Naive thymus-derived CD4-positive, alpha-beta T cell (primary cell): ENCODE measurements at regions of chr3 and their contacts with region 1.

Region 1: GRCh38 chr3:10437272-10437994 is 68.0 kb downstream of the ATP2B2 start:
- DNase-seq: peak in 8 of 9 donors; percentile 35 to 79 (median 48)
- ATAC-seq: peak; percentile 89
- H3K4me3 ChIP-seq: no peak overlapping the region
- H3K4me3 Mint-ChIP-seq: peak overlapping the region in 8 of 10 donors; percentile 17 to 72 (median 58)
- H3K27ac ChIP-seq: no peak overlapping the region
- H3K27ac Mint-ChIP-seq: peak overlapping the region; percentile 46 to 92 (median 80)
- H3K4me1 ChIP-seq: peaks cover 17 to 19% of the 10 kb centered on the region in 2 donors
- H3K4me1 Mint-ChIP-seq: peaks cover 18 to 38% (median 27%) of the 10 kb centered on the region in 7 donors
- H3K27me3 ChIP-seq: no peaks in the 10 kb centered on the region
- H3K27me3 Mint-ChIP-seq: no peaks in the 10 kb centered on the region

Region 2: GRCh38 chr3:10085736-10086135 is 351.7 kb before region 1 on chr3:
- CTCF ChIA-PET with region 1: no interaction called
- POLR2A ChIA-PET with region 1: no interaction called
- intact Hi-C with region 1: no loop called
- DNase-seq: no peak
- ATAC-seq: no peak
- H3K4me3 ChIP-seq: no peak overlapping the region
- H3K4me3 Mint-ChIP-seq: no peak overlapping the region
- H3K27ac ChIP-seq: no peak overlapping the region
- H3K27ac Mint-ChIP-seq: no peak overlapping the region
- H3K4me1 ChIP-seq: no peaks in the 10 kb centered on the region
- H3K4me1 Mint-ChIP-seq: no peaks in the 10 kb centered on the region
- H3K27me3 ChIP-seq: no peaks in the 10 kb centered on the region
- H3K27me3 Mint-ChIP-seq: no peaks in the 10 kb centered on the region

Region 3: GRCh38 chr3:10505050-10505790 is 67.8 kb after region 1 on chr3 and contains the start of gene ATP2B2:
- CTCF ChIA-PET with region 1: no interaction called
- POLR2A ChIA-PET with region 1: no interaction called
- intact Hi-C with region 1: loop called in 1 of 2 experiments (anchors 10 kb)
- DNase-seq: peak in 4 of 9 donors; percentile 2 to 12 (median 8)
- ATAC-seq: no peak
- H3K4me3 ChIP-seq: no peak within 1 kb of the TSS
- H3K4me3 Mint-ChIP-seq: peak within 1 kb of the TSS in 9 of 10 donors; percentile 50 to 76 (median 69)
- H3K27ac ChIP-seq: no peak within 1 kb of the TSS
- H3K27ac Mint-ChIP-seq: peak within 1 kb of the TSS in 1 of 9 donors; percentile 62
- H3K4me1 ChIP-seq: no peaks in the 10 kb centered on the region
- H3K4me1 Mint-ChIP-seq: peaks cover 0 to 3% (median 0%) of the 10 kb centered on the region in 7 donors
- H3K27me3 ChIP-seq: peaks cover 0 to 4% of the 10 kb centered on the region in 2 donors
- H3K27me3 Mint-ChIP-seq: peaks cover 0 to 31% (median 24%) of the 10 kb centered on the region in 5 donors
- total RNA-seq, gene ATP2B2: not detected